ENCODE measurements at regions of chr6 and their contacts with region 1.

Region 1: DNA sequence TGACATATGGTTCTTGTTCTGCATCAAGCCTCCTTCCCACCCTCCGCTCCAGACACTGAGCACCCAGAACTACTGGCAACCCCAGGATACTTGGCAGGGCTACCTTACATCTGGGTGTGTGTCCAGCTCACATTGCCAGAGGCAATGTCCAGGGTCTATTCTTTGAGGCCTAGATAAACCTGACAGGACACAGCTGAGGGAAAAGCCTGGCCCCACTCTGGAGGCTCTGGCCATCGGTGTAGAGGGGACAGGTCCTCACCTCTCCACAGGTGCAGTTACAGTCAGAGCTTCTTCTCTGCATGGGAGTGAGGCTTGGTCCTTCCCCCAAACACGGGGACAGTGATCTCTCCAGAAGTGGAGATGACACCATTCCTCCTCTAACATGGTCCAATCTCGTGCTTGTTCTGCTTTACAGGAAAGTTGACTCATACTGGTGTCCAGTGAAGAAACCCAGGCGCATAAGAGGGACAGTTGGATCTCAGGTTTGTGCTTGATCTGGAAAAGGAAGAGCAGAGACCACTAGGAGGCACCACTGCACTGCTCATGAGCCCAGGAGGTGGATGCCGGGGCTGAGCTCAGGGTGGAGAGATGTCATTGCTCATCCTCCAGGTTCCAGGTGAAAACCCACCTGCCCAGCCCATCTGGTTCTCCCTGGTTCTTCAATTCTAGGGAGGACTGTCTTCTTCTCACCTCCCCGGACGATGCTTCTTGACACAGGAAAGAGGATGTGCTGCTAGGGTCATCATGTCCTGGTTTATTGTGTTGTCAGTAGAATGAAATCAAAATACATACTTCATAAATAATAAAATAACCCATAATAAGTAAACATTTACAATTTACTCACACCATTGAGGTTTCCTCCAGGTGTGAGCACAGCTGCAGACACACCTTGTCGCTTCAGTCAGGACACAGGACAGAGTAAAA is 14.7 kb downstream of the HLA-F start:
- DNase-seq: peak; percentile 84
- H3K4me3 Mint-ChIP-seq: no peak overlapping the region
- H3K27ac Mint-ChIP-seq: no peak overlapping the region
- H3K4me1 Mint-ChIP-seq: peaks cover 18% of the 10 kb centered on the region
- H3K27me3 Mint-ChIP-seq: no peaks in the 10 kb centered on the region
- CTCF ChIP-seq: peak; percentile 84

Region 2: DNA sequence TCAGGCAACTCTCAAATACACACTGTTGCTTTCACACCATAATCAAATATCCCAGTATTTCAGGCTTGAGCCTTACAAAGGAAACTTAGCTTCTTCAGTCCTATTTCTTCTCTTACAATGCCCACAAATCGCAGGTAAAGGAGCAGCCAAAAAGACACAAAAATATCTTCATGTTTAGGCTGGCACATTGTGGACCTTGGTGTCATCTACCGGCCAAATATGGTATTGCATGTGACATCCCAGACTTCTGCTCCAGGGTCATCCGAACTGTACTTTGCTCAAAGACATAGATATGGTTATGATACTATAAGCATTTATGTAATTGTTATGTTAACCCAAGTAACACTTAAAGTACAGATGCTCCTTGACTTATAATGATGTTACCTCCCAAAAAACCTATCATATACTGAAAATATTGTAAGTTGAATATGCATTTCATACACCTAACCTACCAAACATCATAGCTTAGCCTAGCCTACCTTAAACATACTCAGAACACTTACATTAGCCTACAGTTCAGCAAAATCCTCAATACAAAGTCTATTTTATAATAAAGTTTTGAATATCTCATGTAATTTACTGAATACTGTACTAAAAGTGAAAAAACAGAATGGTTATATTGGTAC is 148.4 kb before region 1 on chr6:
- CTCF ChIA-PET with region 1: no interaction called
- POLR2A ChIA-PET with region 1: no interaction called
- intact Hi-C with region 1: no loop called
- DNase-seq: peak; percentile 65
- H3K4me3 Mint-ChIP-seq: no peak overlapping the region
- H3K27ac Mint-ChIP-seq: no peak overlapping the region
- H3K4me1 Mint-ChIP-seq: no peaks in the 10 kb centered on the region
- H3K27me3 Mint-ChIP-seq: peaks cover 68% of the 10 kb centered on the region
- CTCF ChIP-seq: peak; percentile 92

Region 3: GRCh38 chr6:29603930-29604329 is 134.0 kb before region 1 on chr6:
- CTCF ChIA-PET with region 1: no interaction called
- POLR2A ChIA-PET with region 1: no interaction called
- intact Hi-C with region 1: no loop called
- DNase-seq: no peak
- H3K4me3 Mint-ChIP-seq: no peak overlapping the region
- H3K27ac Mint-ChIP-seq: no peak overlapping the region
- H3K4me1 Mint-ChIP-seq: no peaks in the 10 kb centered on the region
- H3K27me3 Mint-ChIP-seq: no peaks in the 10 kb centered on the region
- CTCF ChIP-seq: no peak

Region 4: GRCh38 chr6:29705389-29706231 is 32.4 kb before region 1 on chr6:
- CTCF ChIA-PET with region 1: interaction called, 10 read pairs
- POLR2A ChIA-PET with region 1: no interaction called
- intact Hi-C with region 1: loop called (anchors 1 kb)
- DNase-seq: peak; percentile 72
- H3K4me3 Mint-ChIP-seq: no peak overlapping the region
- H3K27ac Mint-ChIP-seq: no peak overlapping the region
- H3K4me1 Mint-ChIP-seq: peaks cover 6% of the 10 kb centered on the region
- H3K27me3 Mint-ChIP-seq: peaks cover 15% of the 10 kb centered on the region
- CTCF ChIP-seq: peak; percentile 56

Region 5: DNA sequence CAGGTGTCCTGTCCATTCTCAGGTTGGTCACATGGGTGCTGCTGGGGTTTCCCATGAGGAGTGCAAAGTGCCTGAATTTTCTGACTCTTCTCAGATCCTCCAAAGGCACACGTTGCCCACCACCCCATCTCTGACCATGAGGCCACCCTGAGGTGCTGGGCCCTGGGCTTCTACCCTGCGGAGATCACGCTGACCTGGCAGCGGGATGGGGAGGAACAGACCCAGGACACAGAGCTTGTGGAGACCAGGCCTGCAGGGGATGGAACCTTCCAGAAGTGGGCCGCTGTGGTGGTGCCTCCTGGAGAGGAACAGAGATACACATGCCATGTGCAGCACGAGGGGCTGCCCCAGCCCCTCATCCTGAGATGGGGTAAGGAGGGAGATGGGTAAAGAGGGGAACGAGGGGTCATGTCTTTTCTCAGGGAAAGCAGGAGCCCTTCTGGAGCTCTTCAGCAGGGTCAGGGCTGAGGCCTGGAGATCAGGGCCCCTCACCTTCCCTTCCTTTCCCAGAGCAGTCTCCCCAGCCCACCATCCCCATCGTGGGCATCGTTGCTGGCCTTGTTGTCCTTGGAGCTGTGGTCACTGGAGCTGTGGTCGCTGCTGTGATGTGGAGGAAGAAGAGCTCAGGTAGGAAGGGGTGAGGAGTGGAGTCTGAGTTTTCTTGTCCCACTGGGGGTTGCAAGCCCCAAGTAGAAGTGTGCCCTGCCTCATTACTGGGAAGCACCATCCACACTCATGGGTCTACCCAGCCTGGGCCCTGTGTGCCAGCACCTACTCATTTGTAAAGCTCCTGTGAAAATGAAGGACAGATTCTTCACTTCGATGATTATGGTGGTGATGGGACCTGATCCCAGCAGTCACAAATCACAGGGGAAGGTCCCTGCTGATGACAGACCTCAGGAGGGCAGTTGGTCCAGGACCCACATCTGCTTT is 12.8 kb before region 1 on chr6:
- CTCF ChIA-PET with region 1: interaction called, 15 read pairs
- POLR2A ChIA-PET with region 1: interaction called, 6 read pairs
- intact Hi-C with region 1: no loop called
- DNase-seq: no peak
- H3K4me3 Mint-ChIP-seq: peak overlapping the region; percentile 79
- H3K27ac Mint-ChIP-seq: no peak overlapping the region
- H3K4me1 Mint-ChIP-seq: peaks cover 5% of the 10 kb centered on the region
- H3K27me3 Mint-ChIP-seq: no peaks in the 10 kb centered on the region
- CTCF ChIP-seq: no peak

Region 6: GRCh38 chr6:29813809-29814208 is 75.8 kb after region 1 on chr6:
- CTCF ChIA-PET with region 1: interaction called, 10 read pairs
- POLR2A ChIA-PET with region 1: interaction called, 3 read pairs
- intact Hi-C with region 1: no loop called
- DNase-seq: peak; percentile 86
- H3K4me3 Mint-ChIP-seq: no peak overlapping the region
- H3K27ac Mint-ChIP-seq: peak overlapping the region; percentile 76
- H3K4me1 Mint-ChIP-seq: peaks cover 8% of the 10 kb centered on the region
- H3K27me3 Mint-ChIP-seq: no peaks in the 10 kb centered on the region
- CTCF ChIP-seq: no peak

Region 7: GRCh38 chr6:29834564-29835436 is 96.8 kb after region 1 on chr6:
- CTCF ChIA-PET with region 1: interaction called, 116 read pairs
- POLR2A ChIA-PET with region 1: interaction called, 8 read pairs
- intact Hi-C with region 1: loop called (anchors 1 kb)
- DNase-seq: peak; percentile 42
- H3K4me3 Mint-ChIP-seq: no peak overlapping the region
- H3K27ac Mint-ChIP-seq: no peak overlapping the region
- H3K4me1 Mint-ChIP-seq: peaks cover 6% of the 10 kb centered on the region
- H3K27me3 Mint-ChIP-seq: peaks cover 45% of the 10 kb centered on the region
- CTCF ChIP-seq: peak; percentile 91